ENCODE measurements at regions of chr6 and their contacts with region 1.

Region 1: GRCh38 chr6:42453031-42453653 is 1.4 kb upstream of the TRERF1 start:
- DNase-seq: peak; percentile 42 to 90 (median 76)
- ATAC-seq: peak; percentile 74
- H3K4me3 ChIP-seq: peak overlapping the region; percentile 82 to 98
- H3K4me3 Mint-ChIP-seq: peak overlapping the region; percentile 100
- H3K27ac ChIP-seq: peak overlapping the region in 1 of 2 experiments; percentile 72
- H3K27ac Mint-ChIP-seq: no peak overlapping the region
- H3K4me1 ChIP-seq: peaks cover 29% of the 10 kb centered on the region
- H3K4me1 Mint-ChIP-seq: peaks cover 33% of the 10 kb centered on the region
- H3K27me3 ChIP-seq: no peaks in the 10 kb centered on the region
- H3K27me3 Mint-ChIP-seq: no peaks in the 10 kb centered on the region
- CTCF ChIP-seq: no peak

Region 2: DNA sequence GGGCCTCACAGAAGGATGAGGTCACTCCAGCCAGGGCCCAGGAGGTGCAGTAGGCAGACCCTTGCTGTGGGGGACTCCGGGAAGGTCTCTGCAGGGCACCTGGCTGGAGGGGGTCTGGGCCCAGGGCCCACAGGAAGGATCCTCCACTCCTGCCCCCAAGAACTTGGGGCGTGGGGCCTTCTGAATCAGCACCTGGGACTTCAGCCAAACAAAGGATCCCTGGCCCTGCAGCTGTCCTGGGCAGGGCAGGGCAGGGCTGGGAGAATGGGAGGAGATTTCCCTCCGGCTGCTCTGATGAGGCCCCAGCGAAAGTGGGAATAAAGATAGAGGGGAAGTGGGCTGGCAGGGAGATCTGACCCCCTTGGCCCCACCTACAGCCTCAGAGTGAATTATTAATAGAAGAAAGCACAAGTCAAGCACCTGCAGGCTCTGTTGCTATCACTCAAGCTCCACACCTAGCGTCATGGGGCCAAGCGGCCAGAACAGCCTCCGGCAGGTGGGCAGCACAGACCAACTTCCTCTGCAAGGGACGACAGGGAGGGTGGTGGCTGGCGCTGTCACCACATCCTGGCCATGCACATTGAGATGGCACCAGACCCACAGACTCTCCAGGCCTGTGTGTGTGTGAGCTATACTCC is 173.9 kb before region 1 on chr6:
- CTCF ChIA-PET with region 1: interaction called, 3 read pairs
- POLR2A ChIA-PET with region 1: interaction called, 16 read pairs
- intact Hi-C with region 1: loop called in 1 of 2 experiments (anchors 5 kb)
- DNase-seq: peak in 7 of 9 experiments; percentile 27 to 74 (median 50)
- ATAC-seq: peak; percentile 10
- H3K4me3 ChIP-seq: no peak overlapping the region
- H3K4me3 Mint-ChIP-seq: peak overlapping the region; percentile 64
- H3K27ac ChIP-seq: peak overlapping the region; percentile 59 to 72
- H3K27ac Mint-ChIP-seq: peak overlapping the region; percentile 88
- H3K4me1 ChIP-seq: peaks cover 54% of the 10 kb centered on the region
- H3K4me1 Mint-ChIP-seq: peaks cover 52% of the 10 kb centered on the region
- H3K27me3 ChIP-seq: no peaks in the 10 kb centered on the region
- H3K27me3 Mint-ChIP-seq: no peaks in the 10 kb centered on the region
- CTCF ChIP-seq: no peak

Region 3: GRCh38 chr6:42352856-42353564 is 100.1 kb before region 1 on chr6:
- CTCF ChIA-PET with region 1: interaction called, 3 read pairs
- POLR2A ChIA-PET with region 1: no interaction called
- intact Hi-C with region 1: loop called in 1 of 2 experiments (anchors 2 kb)
- DNase-seq: no peak
- ATAC-seq: no peak
- H3K4me3 ChIP-seq: no peak overlapping the region
- H3K4me3 Mint-ChIP-seq: no peak overlapping the region
- H3K27ac ChIP-seq: no peak overlapping the region
- H3K27ac Mint-ChIP-seq: no peak overlapping the region
- H3K4me1 ChIP-seq: no peaks in the 10 kb centered on the region
- H3K4me1 Mint-ChIP-seq: peaks cover 18% of the 10 kb centered on the region
- H3K27me3 ChIP-seq: no peaks in the 10 kb centered on the region
- H3K27me3 Mint-ChIP-seq: no peaks in the 10 kb centered on the region
- CTCF ChIP-seq: no peak

Region 4: GRCh38 chr6:42390228-42390934 is 62.8 kb before region 1 on chr6:
- CTCF ChIA-PET with region 1: interaction called, 8 read pairs
- POLR2A ChIA-PET with region 1: interaction called, 115 read pairs
- intact Hi-C with region 1: loop called (anchors 1 to 2 kb)
- DNase-seq: peak; percentile 22 to 88 (median 62)
- ATAC-seq: peak; percentile 77
- H3K4me3 ChIP-seq: peak overlapping the region; percentile 10 to 31
- H3K4me3 Mint-ChIP-seq: peak overlapping the region; percentile 80
- H3K27ac ChIP-seq: peak overlapping the region; percentile 74 to 86
- H3K27ac Mint-ChIP-seq: peak overlapping the region; percentile 100
- H3K4me1 ChIP-seq: peaks cover 99% of the 10 kb centered on the region
- H3K4me1 Mint-ChIP-seq: peaks cover 97% of the 10 kb centered on the region
- H3K27me3 ChIP-seq: no peaks in the 10 kb centered on the region
- H3K27me3 Mint-ChIP-seq: no peaks in the 10 kb centered on the region
- CTCF ChIP-seq: no peak

Region 5: GRCh38 chr6:42428326-42429041 is 24.7 kb before region 1 on chr6:
- CTCF ChIA-PET with region 1: interaction called, 5 read pairs
- POLR2A ChIA-PET with region 1: interaction called, 12 read pairs
- intact Hi-C with region 1: no loop called
- DNase-seq: peak in 6 of 9 experiments; percentile 30 to 79 (median 58)
- ATAC-seq: peak; percentile 86
- H3K4me3 ChIP-seq: no peak overlapping the region
- H3K4me3 Mint-ChIP-seq: peak overlapping the region; percentile 50
- H3K27ac ChIP-seq: peak overlapping the region in 1 of 2 experiments; percentile 72
- H3K27ac Mint-ChIP-seq: peak overlapping the region; percentile 92
- H3K4me1 ChIP-seq: peaks cover 27% of the 10 kb centered on the region
- H3K4me1 Mint-ChIP-seq: peaks cover 68% of the 10 kb centered on the region
- H3K27me3 ChIP-seq: no peaks in the 10 kb centered on the region
- H3K27me3 Mint-ChIP-seq: no peaks in the 10 kb centered on the region
- CTCF ChIP-seq: no peak

Region 6: GRCh38 chr6:42532038-42532669 is 79.0 kb after region 1 on chr6:
- CTCF ChIA-PET with region 1: interaction called, 12 read pairs
- POLR2A ChIA-PET with region 1: no interaction called
- intact Hi-C with region 1: no loop called
- DNase-seq: peak in 4 of 9 experiments; percentile 14 to 72 (median 36)
- ATAC-seq: no peak
- H3K4me3 ChIP-seq: no peak overlapping the region
- H3K4me3 Mint-ChIP-seq: no peak overlapping the region
- H3K27ac ChIP-seq: no peak overlapping the region
- H3K27ac Mint-ChIP-seq: no peak overlapping the region
- H3K4me1 ChIP-seq: no peaks in the 10 kb centered on the region
- H3K4me1 Mint-ChIP-seq: no peaks in the 10 kb centered on the region
- H3K27me3 ChIP-seq: no peaks in the 10 kb centered on the region
- H3K27me3 Mint-ChIP-seq: no peaks in the 10 kb centered on the region
- CTCF ChIP-seq: peak; percentile 80

Region 7: GRCh38 chr6:42702200-42702599 is 249.1 kb after region 1 on chr6:
- CTCF ChIA-PET with region 1: no interaction called
- POLR2A ChIA-PET with region 1: no interaction called
- intact Hi-C with region 1: no loop called
- DNase-seq: no peak
- ATAC-seq: no peak
- H3K4me3 ChIP-seq: no peak overlapping the region
- H3K4me3 Mint-ChIP-seq: no peak overlapping the region
- H3K27ac ChIP-seq: no peak overlapping the region
- H3K27ac Mint-ChIP-seq: no peak overlapping the region
- H3K4me1 ChIP-seq: no peaks in the 10 kb centered on the region
- H3K4me1 Mint-ChIP-seq: no peaks in the 10 kb centered on the region
- H3K27me3 ChIP-seq: no peaks in the 10 kb centered on the region
- H3K27me3 Mint-ChIP-seq: no peaks in the 10 kb centered on the region
- CTCF ChIP-seq: no peak

Measured in CD8-positive, alpha-beta T cell (primary cell).